Heart right ventricle (tissue), 16 donors: ENCODE measurements at regions of chr12 and their contacts with region 1.

Region 1: GRCh38 chr12:55738123-55739024 is 4.5 kb upstream of the GDF11 start:
- DNase-seq: peak; percentile 75 to 88
- ATAC-seq: peak; percentile 66 to 86 (median 77)
- H3K4me3 ChIP-seq: peak overlapping the region in 9 of 10 donors; percentile 34 to 65 (median 61)
- H3K27ac ChIP-seq: peak overlapping the region in 9 of 10 donors; percentile 17 to 84 (median 70)
- H3K4me1 ChIP-seq: peaks cover 8 to 27% (median 21%) of the 10 kb centered on the region in 9 donors
- H3K27me3 ChIP-seq: no peaks in the 10 kb centered on the region
- CTCF ChIP-seq: peak; percentile 71 to 91 (median 89)

Region 2: GRCh38 chr12:55659486-55660385 is 78.6 kb before region 1 on chr12:
- intact Hi-C with region 1: loop called in 1 of 10 experiments (anchors 2 kb)
- DNase-seq: peak in 1 of 2 donors; percentile 66
- ATAC-seq: peak; percentile 74 to 94 (median 90)
- H3K4me3 ChIP-seq: peak overlapping the region in 4 of 10 donors; percentile 4 to 24 (median 14)
- H3K27ac ChIP-seq: peak overlapping the region; percentile 68 to 96 (median 87)
- H3K4me1 ChIP-seq: peaks cover 0 to 30% (median 18%) of the 10 kb centered on the region in 9 donors
- H3K27me3 ChIP-seq: no peaks in the 10 kb centered on the region
- CTCF ChIP-seq: peak in 8 of 9 donors; percentile 13 to 63 (median 51)

Region 3: DNA sequence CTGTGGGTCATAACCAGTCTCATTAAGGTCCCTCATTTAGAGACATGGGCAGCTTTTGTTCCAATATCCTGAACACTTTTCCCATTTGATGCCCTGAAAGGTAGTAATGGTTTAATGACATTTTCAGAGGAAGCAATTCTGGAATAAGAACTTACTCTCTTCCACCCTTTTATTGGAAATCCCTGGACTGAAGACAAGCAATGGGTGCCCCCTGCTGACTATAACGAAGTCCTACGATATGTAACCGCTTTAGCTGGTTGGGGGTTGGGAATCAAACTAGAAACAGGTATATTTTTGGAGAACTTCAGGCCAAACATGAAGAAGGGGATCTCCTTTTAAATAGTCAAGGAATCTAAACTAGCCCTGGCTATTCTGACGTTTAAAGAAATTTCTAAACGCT is 58.7 kb after region 1 on chr12:
- intact Hi-C with region 1: loop called in 6 of 10 experiments (anchors 2 to 10 kb)
- DNase-seq: peak in 1 of 2 donors; percentile 19
- ATAC-seq: peak in 3 of 8 donors; percentile 45 to 72 (median 61)
- H3K4me3 ChIP-seq: no peak overlapping the region
- H3K27ac ChIP-seq: no peak overlapping the region
- H3K4me1 ChIP-seq: peaks cover 0 to 11% (median 0%) of the 10 kb centered on the region in 9 donors
- H3K27me3 ChIP-seq: no peaks in the 10 kb centered on the region
- CTCF ChIP-seq: peak in 8 of 9 donors; percentile 13 to 67 (median 54)

Region 4: DNA sequence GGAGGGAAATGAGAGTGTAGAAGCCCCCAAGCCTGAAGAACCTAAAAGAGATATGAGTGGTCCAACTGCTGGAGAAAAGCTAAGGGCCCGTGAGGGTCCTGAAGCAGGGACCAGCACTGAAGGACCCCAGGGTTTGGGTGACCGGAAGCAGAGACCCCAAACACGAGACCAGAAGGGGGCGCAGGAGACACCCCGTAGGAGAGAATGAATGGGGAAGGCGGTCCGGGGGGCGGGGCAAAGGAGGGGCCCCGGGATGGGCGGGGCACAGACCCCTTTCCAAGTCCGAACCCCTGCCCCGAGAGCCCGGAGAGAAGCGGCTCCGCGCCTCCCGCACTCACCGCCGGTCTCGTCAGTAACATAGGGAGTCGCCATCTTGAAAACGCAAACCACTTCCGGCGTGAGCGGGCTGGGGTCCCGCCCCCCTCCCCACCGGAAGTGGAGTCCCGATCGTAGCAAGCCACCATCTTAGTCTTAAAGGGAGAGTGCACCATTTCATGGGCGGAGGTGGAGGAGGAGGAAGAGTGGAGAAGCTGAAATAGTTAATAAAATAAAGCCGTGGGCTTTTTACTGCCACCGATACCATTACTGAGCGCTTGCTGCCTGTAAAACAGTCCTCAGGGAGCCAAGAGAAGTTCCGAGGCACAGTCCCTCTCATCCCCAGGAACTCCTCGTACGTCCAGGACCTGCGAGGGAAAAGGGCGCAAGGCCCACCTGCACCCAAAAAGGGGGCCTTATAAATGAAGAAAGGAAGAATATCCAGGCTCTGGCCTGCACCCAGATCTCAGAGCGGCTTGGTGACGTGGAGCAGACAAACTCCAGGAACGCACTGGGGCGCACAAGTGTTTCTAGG is 188.6 kb after region 1 on chr12:
- intact Hi-C with region 1: loop called in 2 of 10 experiments (anchors 10 kb)
- DNase-seq: peak; percentile 84 to 91
- ATAC-seq: peak; percentile 87 to 93 (median 92)
- H3K4me3 ChIP-seq: peak overlapping the region; percentile 69 to 100 (median 85)
- H3K27ac ChIP-seq: peak overlapping the region; percentile 88 to 99 (median 96)
- H3K4me1 ChIP-seq: peaks cover 4 to 57% (median 37%) of the 10 kb centered on the region in 9 donors
- H3K27me3 ChIP-seq: no peaks in the 10 kb centered on the region
- CTCF ChIP-seq: peak; percentile 50 to 92 (median 79)

Region 5: DNA sequence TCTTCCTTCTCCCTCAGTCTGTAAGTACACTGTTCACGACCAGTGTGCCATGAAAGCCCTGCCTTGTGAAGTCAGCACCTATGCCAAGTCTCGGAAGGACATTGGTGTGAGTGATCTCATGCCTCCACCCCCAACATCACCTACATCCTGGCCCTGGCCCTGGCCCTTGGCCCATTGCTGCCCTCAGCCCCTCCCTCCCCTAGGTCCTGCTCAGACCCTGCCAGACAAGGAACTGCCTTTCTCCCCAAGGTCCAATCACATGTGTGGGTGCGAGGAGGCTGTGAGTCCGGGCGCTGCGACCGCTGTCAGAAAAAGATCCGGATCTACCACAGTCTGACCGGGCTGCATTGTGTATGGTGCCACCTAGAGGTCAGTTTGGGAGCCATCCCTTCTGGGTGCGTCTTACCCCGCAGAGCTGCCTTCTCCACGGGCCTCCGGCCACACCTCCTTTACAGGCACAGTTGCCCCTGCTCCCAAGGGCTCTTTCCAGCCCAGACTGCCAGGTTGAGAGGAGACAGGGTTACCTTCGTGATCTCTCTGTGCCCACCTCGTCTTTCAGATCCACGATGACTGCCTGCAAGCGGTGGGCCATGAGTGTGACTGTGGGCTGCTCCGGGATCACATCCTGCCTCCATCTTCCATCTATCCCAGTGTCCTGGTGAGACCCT is 201.8 kb after region 1 on chr12:
- intact Hi-C with region 1: loop called (anchors 1 to 10 kb)
- DNase-seq: peak; percentile 73 to 87
- ATAC-seq: peak; percentile 93 to 96 (median 95)
- H3K4me3 ChIP-seq: peak overlapping the region in 6 of 10 donors; percentile 16 to 33 (median 25)
- H3K27ac ChIP-seq: peak overlapping the region in 5 of 10 donors; percentile 7 to 60 (median 27)
- H3K4me1 ChIP-seq: peaks cover 0 to 14% (median 6%) of the 10 kb centered on the region in 9 donors
- H3K27me3 ChIP-seq: no peaks in the 10 kb centered on the region
- CTCF ChIP-seq: peak; percentile 88 to 96 (median 94)

Region 6: GRCh38 chr12:56041552-56042429 is 303.4 kb after region 1 on chr12 and contains the start of gene RPS26:
- intact Hi-C with region 1: loop called in 3 of 10 experiments (anchors 5 to 10 kb)
- DNase-seq: peak; percentile 94 to 98
- ATAC-seq: peak; percentile 95 to 99 (median 97)
- H3K4me3 ChIP-seq: peak within 1 kb of the TSS; percentile 57 to 96 (median 80)
- H3K27ac ChIP-seq: peak within 1 kb of the TSS; percentile 92 to 99 (median 97)
- H3K4me1 ChIP-seq: peaks cover 0 to 23% (median 18%) of the 10 kb centered on the region in 9 donors
- H3K27me3 ChIP-seq: no peaks in the 10 kb centered on the region
- CTCF ChIP-seq: peak in 8 of 9 donors; percentile 34 to 69 (median 54)
- total RNA-seq, gene RPS26: 6.9 to 39.6 (median 19.3) TPM